ENCODE measurements at regions of chr10 and their contacts with region 1.

Region 1: DNA sequence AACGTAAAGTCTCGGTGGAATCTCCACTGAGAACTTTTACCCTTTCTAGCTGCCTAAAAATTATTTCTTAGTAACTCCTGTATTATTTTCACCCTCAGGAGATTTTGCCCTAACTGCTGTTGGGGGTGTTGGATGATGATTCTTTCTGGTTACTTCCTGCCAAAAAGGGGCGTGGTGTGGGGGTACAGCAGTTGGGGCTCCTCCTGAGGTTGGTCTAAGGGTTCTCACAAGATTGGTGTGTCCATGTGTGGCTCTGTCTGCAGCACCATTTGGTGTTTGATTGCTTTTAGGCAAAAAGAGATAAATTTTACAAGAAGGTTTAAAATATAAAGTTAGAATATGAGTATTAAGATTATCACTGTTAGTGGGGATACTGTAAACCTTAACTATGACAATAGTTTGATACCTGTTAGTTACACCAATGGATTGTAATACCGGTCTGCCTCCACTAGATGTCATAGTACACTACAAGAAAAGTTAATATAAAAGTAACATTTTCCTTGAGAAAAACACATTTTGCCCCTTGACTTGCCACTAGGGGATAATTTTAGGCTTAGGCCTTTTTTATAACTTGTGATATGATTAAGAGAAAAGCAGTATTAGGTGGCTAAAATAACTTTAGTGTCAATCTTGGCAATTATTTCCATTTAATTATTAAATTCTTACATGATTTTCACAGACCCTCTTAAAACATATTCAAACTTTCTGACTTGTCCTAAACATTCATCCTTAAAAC is 928.7 kb downstream of the IPMK start:
- DNase-seq: no peak
- ATAC-seq: peak; percentile 47; the same call in 1 of the 2 replicates
- H3K4me3 ChIP-seq: no peak overlapping the region
- H3K27ac ChIP-seq: no peak overlapping the region
- H3K4me1 ChIP-seq: no peaks in the 10 kb centered on the region
- H3K27me3 ChIP-seq: no peaks in the 10 kb centered on the region
- CTCF ChIP-seq: peak; percentile 22 to 64 (median 50); a peak in 5 of 6 replicates
- POLR2A ChIP-seq: no peak
- RAD21 ChIP-seq: peak; percentile 40

Region 2: GRCh38 chr10:57657164-57657765 is 318.3 kb after region 1 on chr10:
- CTCF ChIA-PET with region 1: no interaction called
- POLR2A ChIA-PET with region 1: no interaction called
- RAD21 ChIA-PET with region 1: no interaction called
- intact Hi-C with region 1: loop called (anchors 1 kb)
- DNase-seq: peak; percentile 13
- ATAC-seq: peak; percentile 62; the same call in 1 of the 2 replicates
- H3K4me3 ChIP-seq: no peak overlapping the region
- H3K27ac ChIP-seq: no peak overlapping the region
- H3K4me1 ChIP-seq: no peaks in the 10 kb centered on the region
- H3K27me3 ChIP-seq: no peaks in the 10 kb centered on the region
- CTCF ChIP-seq: peak in 2 of 3 experiments; percentile 55 to 61; a peak in 4 of 6 replicates
- POLR2A ChIP-seq: no peak
- RAD21 ChIP-seq: peak; percentile 41

Region 3: DNA sequence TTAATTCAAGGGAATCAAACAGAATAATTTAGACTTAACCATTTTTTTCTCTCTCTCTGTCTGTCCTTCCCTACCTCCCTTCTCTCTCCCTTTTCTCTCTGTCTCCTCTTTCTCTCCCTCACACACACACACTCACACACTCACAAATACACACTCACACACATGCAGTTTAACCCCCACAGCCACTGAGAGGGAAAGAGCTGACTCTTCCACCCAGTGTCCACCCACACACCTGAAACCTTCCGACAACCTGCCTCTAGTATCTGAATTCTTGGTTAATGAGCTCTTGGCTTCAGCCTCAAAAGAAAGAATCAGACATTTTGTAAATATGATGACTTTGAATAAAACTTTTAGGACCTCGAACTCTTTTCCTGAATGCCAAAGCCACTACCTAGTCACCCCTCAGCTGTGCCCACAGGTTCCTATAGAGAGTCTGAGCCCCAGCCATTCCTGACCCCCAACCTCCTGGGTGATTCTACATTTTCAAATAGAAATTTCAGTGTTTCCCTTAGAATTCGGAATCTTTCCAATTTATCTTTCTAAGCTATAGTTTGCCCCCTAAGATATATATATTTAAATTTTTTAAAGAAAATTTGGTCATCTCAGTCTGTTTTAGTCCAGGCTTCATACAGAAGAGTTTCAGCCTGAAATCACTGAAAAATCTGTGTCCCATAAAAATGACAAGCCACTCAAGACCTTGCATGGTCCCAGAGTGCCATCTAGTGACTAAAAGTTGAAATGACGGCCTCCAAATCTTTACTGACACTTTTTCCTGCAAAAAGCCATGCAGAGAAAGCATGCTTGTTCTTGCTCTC is 725.9 kb after region 1 on chr10:
- CTCF ChIA-PET with region 1: no interaction called
- POLR2A ChIA-PET with region 1: no interaction called
- RAD21 ChIA-PET with region 1: no interaction called
- intact Hi-C with region 1: loop called (anchors 1 kb)
- DNase-seq: peak; percentile 19
- ATAC-seq: peak; percentile 67
- H3K4me3 ChIP-seq: no peak overlapping the region
- H3K27ac ChIP-seq: no peak overlapping the region
- H3K4me1 ChIP-seq: no peaks in the 10 kb centered on the region
- H3K27me3 ChIP-seq: no peaks in the 10 kb centered on the region
- CTCF ChIP-seq: peak; percentile 16 to 68 (median 66); a peak in 4 of 6 replicates
- POLR2A ChIP-seq: no peak
- RAD21 ChIP-seq: peak; percentile 70

Region 4: GRCh38 chr10:58152673-58153263 is 813.8 kb after region 1 on chr10:
- CTCF ChIA-PET with region 1: interaction called, 5 read pairs
- POLR2A ChIA-PET with region 1: no interaction called
- RAD21 ChIA-PET with region 1: no interaction called
- intact Hi-C with region 1: loop called (anchors 2 kb)
- DNase-seq: peak; percentile 41
- ATAC-seq: peak; percentile 60; the same call in 1 of the 2 replicates
- H3K4me3 ChIP-seq: no peak overlapping the region
- H3K27ac ChIP-seq: no peak overlapping the region
- H3K4me1 ChIP-seq: peaks cover 0 to 4% of the 10 kb centered on the region in 2 experiments; a peak in 3 of 4 replicates
- H3K27me3 ChIP-seq: no peaks in the 10 kb centered on the region
- CTCF ChIP-seq: peak; percentile 8 to 69 (median 64); a peak in 5 of 6 replicates
- POLR2A ChIP-seq: no peak
- RAD21 ChIP-seq: peak; percentile 58

Measured in HCT116 (cell line).